Activated CD4-positive, alpha-beta memory T cell treated with anti-CD3 and anti-CD28 coated beads, Interleukin-2, amount 10 ng/mL, durations not matched to agents 7 days and 5 days (primary cell): ENCODE measurements at regions of chr1 and their contacts with region 1.

Region 1: DNA sequence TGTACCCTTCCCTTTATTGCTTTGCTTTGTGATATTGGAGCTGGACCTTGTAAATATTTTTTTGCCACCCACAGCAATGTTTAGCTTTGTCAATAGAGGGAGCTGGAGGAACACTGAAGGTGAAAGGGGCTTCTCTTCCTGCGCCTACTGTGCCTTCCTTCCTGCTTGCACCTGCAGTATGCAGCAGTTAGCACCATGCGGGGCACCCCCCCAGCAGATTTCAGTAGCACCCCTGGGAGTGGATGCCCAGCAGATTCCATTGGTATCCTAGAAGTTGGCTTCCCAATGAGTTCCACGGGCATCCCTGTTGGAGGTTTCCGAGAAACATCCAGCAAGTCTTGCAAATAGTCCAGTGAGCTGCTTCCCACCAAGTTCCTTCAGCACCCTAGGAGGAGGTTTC is 25.6 kb downstream of the S100A10 start:
- DNase-seq: peak; percentile 59
- H3K4me3 Mint-ChIP-seq: no peak overlapping the region
- H3K27ac Mint-ChIP-seq: no peak overlapping the region
- H3K4me1 Mint-ChIP-seq: peaks cover 25% of the 10 kb centered on the region
- H3K27me3 Mint-ChIP-seq: no peaks in the 10 kb centered on the region

Region 2: GRCh38 chr1:151934048-151934493 is 34.0 kb before region 1 on chr1:
- CTCF ChIA-PET with region 1: interaction called, 66 read pairs
- POLR2A ChIA-PET with region 1: interaction called, 4 read pairs
- DNase-seq: peak; percentile 48
- H3K4me3 Mint-ChIP-seq: no peak overlapping the region
- H3K27ac Mint-ChIP-seq: no peak overlapping the region
- H3K4me1 Mint-ChIP-seq: peaks cover 2% of the 10 kb centered on the region
- H3K27me3 Mint-ChIP-seq: peaks cover 8% of the 10 kb centered on the region

Region 3: GRCh38 chr1:151953409-151954094 is 14.5 kb before region 1 on chr1:
- CTCF ChIA-PET with region 1: interaction called, 11 read pairs
- POLR2A ChIA-PET with region 1: no interaction called
- DNase-seq: no peak
- H3K4me3 Mint-ChIP-seq: no peak overlapping the region
- H3K27ac Mint-ChIP-seq: no peak overlapping the region
- H3K4me1 Mint-ChIP-seq: no peaks in the 10 kb centered on the region
- H3K27me3 Mint-ChIP-seq: peaks cover 5% of the 10 kb centered on the region

Region 4: DNA sequence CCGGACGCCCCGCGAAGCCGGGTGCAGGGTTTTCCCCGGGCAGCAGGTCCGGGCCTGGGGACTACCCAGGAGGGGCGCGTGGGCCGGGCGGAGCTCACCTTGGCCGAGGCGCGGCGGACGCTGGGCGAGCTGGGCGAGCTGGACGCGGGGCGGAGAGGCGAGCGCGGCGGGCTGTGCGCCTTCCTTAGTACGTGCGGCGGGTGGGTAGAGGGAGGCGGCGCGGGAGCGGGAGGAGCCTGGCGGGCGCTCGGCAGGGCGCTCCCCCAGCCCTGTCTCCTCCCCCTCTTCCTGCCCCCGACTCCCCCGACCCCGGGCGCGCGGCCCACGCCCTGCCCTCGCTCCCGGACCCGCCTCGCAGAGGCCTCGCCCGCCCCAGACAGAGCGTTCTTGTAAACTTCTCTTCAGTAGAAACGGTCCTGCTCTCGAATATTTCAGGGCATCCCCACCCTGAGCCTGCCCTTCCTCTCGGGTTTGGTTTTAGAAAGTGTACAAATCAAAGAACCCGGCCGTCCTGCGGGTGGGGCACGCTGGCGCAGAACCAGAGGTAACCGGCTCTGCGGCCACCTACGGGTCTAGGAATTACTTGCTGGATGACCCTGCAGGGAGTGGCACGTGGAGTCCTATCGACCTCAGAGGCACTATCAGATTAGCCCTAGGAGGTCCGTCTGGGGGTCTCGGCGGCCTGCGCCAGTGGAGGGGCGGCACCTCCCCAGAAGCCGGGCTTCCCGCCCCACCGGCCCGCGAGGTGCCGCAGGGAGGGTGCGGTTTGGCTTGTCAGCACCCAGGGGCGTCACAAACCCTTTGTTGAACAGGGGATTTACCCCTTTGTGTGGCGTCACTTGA is 25.8 kb after region 1 on chr1 and contains the start of gene S100A10:
- CTCF ChIA-PET with region 1: interaction called, 221 read pairs
- POLR2A ChIA-PET with region 1: interaction called, 8 read pairs
- DNase-seq: peak; percentile 86
- H3K4me3 Mint-ChIP-seq: peak within 1 kb of the TSS; percentile 91
- H3K27ac Mint-ChIP-seq: peak within 1 kb of the TSS; percentile 98
- H3K4me1 Mint-ChIP-seq: peaks cover 53% of the 10 kb centered on the region
- H3K27me3 Mint-ChIP-seq: no peaks in the 10 kb centered on the region
- total RNA-seq, gene S100A10: 631 to 641 TPM

Region 5: DNA sequence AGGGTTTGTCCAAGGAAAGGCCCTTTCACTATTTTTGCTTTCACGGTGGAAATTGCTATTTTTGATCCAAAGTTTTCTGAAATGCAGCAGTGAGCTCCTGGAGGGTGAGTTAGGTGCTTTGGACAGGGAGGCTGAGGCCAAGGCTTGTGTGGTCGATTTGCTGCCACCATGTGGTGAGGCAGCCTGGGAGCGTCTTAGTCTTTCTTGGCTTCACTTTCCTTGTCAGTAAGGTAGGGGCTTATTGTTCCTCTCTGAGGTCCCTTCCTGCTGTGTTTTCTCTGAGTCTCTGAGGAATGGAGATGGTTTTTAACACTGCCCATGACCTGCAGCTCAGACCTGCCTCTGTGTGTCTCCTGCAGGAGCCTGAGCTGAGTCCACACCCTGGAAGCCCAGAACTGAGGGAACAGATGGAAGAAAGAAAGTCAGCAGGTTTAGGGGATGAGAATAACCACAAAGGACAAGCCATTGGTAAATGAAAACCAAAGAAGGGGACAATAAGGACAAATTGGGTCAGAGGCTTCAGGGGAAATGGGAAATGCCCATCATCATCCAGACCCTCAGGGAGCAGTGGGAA is 45.7 kb after region 1 on chr1:
- CTCF ChIA-PET with region 1: interaction called, 16 read pairs
- POLR2A ChIA-PET with region 1: interaction called, 3 read pairs
- DNase-seq: peak; percentile 66
- H3K4me3 Mint-ChIP-seq: no peak overlapping the region
- H3K27ac Mint-ChIP-seq: no peak overlapping the region
- H3K4me1 Mint-ChIP-seq: peaks cover 6% of the 10 kb centered on the region
- H3K27me3 Mint-ChIP-seq: peaks cover 30% of the 10 kb centered on the region

Region 6: GRCh38 chr1:152061952-152062351 is 93.9 kb after region 1 on chr1:
- CTCF ChIA-PET with region 1: no interaction called
- POLR2A ChIA-PET with region 1: no interaction called
- DNase-seq: no peak
- H3K4me3 Mint-ChIP-seq: no peak overlapping the region
- H3K27ac Mint-ChIP-seq: no peak overlapping the region
- H3K4me1 Mint-ChIP-seq: no peaks in the 10 kb centered on the region
- H3K27me3 Mint-ChIP-seq: peaks cover 26% of the 10 kb centered on the region